CD4-positive, alpha-beta T cell (primary cell): ENCODE measurements at regions of chr1 and their contacts with region 1.

Region 1: DNA sequence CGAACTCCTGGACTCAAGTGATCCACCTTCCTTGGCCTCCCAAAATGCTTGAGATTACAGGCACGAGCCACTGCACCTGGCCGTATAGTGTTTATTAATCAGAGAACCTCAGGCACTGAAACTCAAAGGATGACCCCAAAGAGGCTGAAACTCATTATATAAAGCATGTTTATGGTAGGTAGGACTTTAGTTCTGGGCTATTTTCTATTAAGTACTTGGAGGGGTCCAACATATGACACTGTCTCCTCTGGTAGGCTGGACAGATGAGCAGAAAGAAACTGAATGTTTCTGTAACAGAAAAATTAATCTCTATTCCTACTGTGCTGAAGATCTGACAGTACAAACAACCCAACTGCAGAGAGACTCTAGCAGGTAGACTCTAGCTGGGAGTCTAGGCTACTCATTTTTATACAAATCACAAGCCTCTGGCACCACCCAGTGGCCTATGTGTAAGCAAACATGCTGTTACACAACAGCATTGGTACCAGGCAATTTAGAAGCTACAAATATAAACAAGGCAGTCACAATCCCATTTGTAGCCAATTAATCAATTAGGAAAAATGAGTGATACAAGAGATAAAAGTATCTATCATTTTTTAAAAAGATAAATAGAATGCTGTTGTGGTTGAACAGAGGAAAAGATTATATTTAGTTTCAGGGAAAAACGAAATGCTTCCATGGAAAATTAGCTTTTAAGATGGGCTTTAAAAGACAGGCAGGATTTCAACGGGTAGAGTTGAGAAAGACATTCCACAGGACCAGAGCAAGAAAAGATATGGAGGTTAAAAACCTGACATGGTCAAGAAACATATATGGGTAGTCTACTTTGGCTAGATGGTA is 10.4 kb downstream of the DCAF8 start:
- DNase-seq: peak; percentile 25 to 82 (median 49)
- ATAC-seq: peak; percentile 100
- H3K4me3 ChIP-seq: no peak overlapping the region
- H3K4me3 Mint-ChIP-seq: no peak overlapping the region
- H3K27ac ChIP-seq: no peak overlapping the region
- H3K27ac Mint-ChIP-seq: peak overlapping the region; percentile 57
- H3K4me1 ChIP-seq: no peaks in the 10 kb centered on the region
- H3K4me1 Mint-ChIP-seq: peaks cover 34% of the 10 kb centered on the region
- H3K27me3 ChIP-seq: no peaks in the 10 kb centered on the region
- H3K27me3 Mint-ChIP-seq: no peaks in the 10 kb centered on the region
- CTCF ChIP-seq: peak; percentile 76

Region 2: GRCh38 chr1:160193091-160193819 is 58.7 kb before region 1 on chr1:
- CTCF ChIA-PET with region 1: interaction called, 14 read pairs
- POLR2A ChIA-PET with region 1: no interaction called
- intact Hi-C with region 1: loop called (anchors 1 kb)
- DNase-seq: peak; percentile 62 to 88 (median 78)
- ATAC-seq: peak; percentile 95
- H3K4me3 ChIP-seq: no peak overlapping the region
- H3K4me3 Mint-ChIP-seq: no peak overlapping the region
- H3K27ac ChIP-seq: no peak overlapping the region
- H3K27ac Mint-ChIP-seq: no peak overlapping the region
- H3K4me1 ChIP-seq: peaks cover 7% of the 10 kb centered on the region
- H3K4me1 Mint-ChIP-seq: no peaks in the 10 kb centered on the region
- H3K27me3 ChIP-seq: no peaks in the 10 kb centered on the region
- H3K27me3 Mint-ChIP-seq: no peaks in the 10 kb centered on the region
- CTCF ChIP-seq: peak; percentile 89

Region 3: GRCh38 chr1:160232911-160233310 is 19.0 kb before region 1 on chr1:
- CTCF ChIA-PET with region 1: interaction called, 10 read pairs
- POLR2A ChIA-PET with region 1: interaction called, 4 read pairs
- intact Hi-C with region 1: no loop called
- DNase-seq: no peak
- ATAC-seq: peak; percentile 29
- H3K4me3 ChIP-seq: no peak overlapping the region
- H3K4me3 Mint-ChIP-seq: no peak overlapping the region
- H3K27ac ChIP-seq: no peak overlapping the region
- H3K27ac Mint-ChIP-seq: peak overlapping the region; percentile 42
- H3K4me1 ChIP-seq: no peaks in the 10 kb centered on the region
- H3K4me1 Mint-ChIP-seq: peaks cover 23% of the 10 kb centered on the region
- H3K27me3 ChIP-seq: no peaks in the 10 kb centered on the region
- H3K27me3 Mint-ChIP-seq: no peaks in the 10 kb centered on the region
- CTCF ChIP-seq: no peak

Region 4: GRCh38 chr1:160284782-160285344 is 33.0 kb after region 1 on chr1 and contains the start of gene PEX19:
- CTCF ChIA-PET with region 1: interaction called, 8 read pairs
- POLR2A ChIA-PET with region 1: interaction called, 14 read pairs
- intact Hi-C with region 1: loop called in 1 of 2 experiments (anchors 5 kb)
- DNase-seq: peak; percentile 90 to 96 (median 92)
- ATAC-seq: peak; percentile 100
- H3K4me3 ChIP-seq: peak within 1 kb of the TSS; percentile 94
- H3K4me3 Mint-ChIP-seq: peak within 1 kb of the TSS; percentile 99
- H3K27ac ChIP-seq: peak within 1 kb of the TSS; percentile 37 to 60
- H3K27ac Mint-ChIP-seq: peak within 1 kb of the TSS; percentile 87
- H3K4me1 ChIP-seq: peaks cover 23% of the 10 kb centered on the region
- H3K4me1 Mint-ChIP-seq: peaks cover 35% of the 10 kb centered on the region
- H3K27me3 ChIP-seq: no peaks in the 10 kb centered on the region
- H3K27me3 Mint-ChIP-seq: no peaks in the 10 kb centered on the region
- CTCF ChIP-seq: no peak
- total RNA-seq, gene PEX19: 32.0 to 33.4 TPM